MCF 10A (cell line): ENCODE measurements at regions of chr2 and their contacts with region 1.

Region 1: DNA sequence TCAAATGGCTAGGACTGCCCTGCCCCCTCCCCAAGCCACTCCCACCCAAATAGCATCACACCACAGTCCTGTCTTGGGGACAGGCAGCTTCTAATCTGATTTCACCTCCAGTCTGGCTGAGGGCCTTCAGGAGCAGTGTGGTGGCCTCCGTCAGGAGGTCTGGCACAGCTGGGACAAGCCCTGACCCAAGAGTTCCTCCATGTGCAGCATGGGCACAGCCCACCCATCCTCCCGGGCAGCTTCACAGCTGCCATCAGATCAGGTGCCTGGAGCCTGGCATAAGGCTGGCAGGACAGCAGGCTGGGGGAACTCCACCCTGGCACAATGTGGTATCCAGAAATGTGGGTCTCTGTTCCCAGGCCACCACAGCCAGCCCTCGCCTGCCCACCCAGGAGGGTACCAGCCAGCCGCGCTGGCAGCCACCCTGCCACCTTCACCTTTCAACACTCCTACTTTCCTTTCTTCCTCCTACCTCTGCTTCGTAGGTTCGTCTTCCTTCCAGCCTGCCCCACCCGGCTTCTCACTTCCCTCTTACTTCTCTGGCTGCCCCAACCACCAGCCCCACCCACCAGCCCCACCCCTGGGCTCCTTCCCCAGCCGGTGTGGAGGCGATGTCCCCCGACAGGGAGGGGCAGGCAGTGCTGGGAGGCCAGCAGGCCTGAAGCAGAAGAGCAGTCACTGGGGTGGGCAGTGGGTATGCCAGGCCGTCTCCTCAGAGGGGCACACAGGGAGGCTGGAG is at the start of gene CAPG:
- DNase-seq: peak; percentile 73
- H3K4me3 Mint-ChIP-seq: peak within 1 kb of the TSS; percentile 70
- H3K27ac Mint-ChIP-seq: peak within 1 kb of the TSS; percentile 83
- H3K4me1 Mint-ChIP-seq: peaks cover 34% of the 10 kb centered on the region
- H3K27me3 Mint-ChIP-seq: no peaks in the 10 kb centered on the region
- CTCF ChIP-seq: no peak
- total RNA-seq, gene CAPG: 173 and 188 TPM in 2 replicates

Region 2: GRCh38 chr2:85327822-85328617 is 82.0 kb before region 1 on chr2 and contains the start of gene TGOLN2:
- CTCF ChIA-PET with region 1: no interaction called
- POLR2A ChIA-PET with region 1: interaction called, 23 read pairs
- intact Hi-C with region 1: no loop called
- DNase-seq: peak; percentile 92
- H3K4me3 Mint-ChIP-seq: peak within 1 kb of the TSS; percentile 82
- H3K27ac Mint-ChIP-seq: peak within 1 kb of the TSS; percentile 94
- H3K4me1 Mint-ChIP-seq: peaks cover 16% of the 10 kb centered on the region
- H3K27me3 Mint-ChIP-seq: no peaks in the 10 kb centered on the region
- CTCF ChIP-seq: no peak
- total RNA-seq, gene TGOLN2: 62.9 and 65.5 TPM in 2 replicates

Region 3: DNA sequence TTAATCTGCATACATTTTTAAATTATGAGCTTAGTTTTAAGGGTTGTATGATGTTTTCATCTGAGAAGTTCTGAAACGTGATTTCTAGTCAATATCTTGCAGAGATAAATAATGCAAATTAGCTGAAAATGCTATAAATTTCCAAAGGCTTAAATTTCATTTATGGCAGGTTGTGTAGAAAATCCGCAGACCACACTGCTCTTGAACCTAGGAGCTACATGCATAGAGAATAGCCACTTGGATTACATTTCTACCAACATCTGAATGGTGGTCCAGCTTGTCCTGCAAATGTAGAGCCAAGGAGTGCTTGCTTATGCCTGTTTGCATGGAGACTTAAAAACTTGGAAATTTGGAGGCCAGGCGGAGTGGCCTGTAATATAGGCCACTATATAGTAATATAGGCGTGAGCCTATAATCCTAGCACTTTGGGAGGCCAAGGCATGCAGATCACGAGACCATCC is 135.8 kb after region 1 on chr2:
- CTCF ChIA-PET with region 1: interaction called, 20 read pairs
- POLR2A ChIA-PET with region 1: interaction called, 34 read pairs
- intact Hi-C with region 1: no loop called
- DNase-seq: no peak
- H3K4me3 Mint-ChIP-seq: no peak overlapping the region
- H3K27ac Mint-ChIP-seq: no peak overlapping the region
- H3K4me1 Mint-ChIP-seq: peaks cover 37% of the 10 kb centered on the region
- H3K27me3 Mint-ChIP-seq: no peaks in the 10 kb centered on the region
- CTCF ChIP-seq: no peak

Region 4: DNA sequence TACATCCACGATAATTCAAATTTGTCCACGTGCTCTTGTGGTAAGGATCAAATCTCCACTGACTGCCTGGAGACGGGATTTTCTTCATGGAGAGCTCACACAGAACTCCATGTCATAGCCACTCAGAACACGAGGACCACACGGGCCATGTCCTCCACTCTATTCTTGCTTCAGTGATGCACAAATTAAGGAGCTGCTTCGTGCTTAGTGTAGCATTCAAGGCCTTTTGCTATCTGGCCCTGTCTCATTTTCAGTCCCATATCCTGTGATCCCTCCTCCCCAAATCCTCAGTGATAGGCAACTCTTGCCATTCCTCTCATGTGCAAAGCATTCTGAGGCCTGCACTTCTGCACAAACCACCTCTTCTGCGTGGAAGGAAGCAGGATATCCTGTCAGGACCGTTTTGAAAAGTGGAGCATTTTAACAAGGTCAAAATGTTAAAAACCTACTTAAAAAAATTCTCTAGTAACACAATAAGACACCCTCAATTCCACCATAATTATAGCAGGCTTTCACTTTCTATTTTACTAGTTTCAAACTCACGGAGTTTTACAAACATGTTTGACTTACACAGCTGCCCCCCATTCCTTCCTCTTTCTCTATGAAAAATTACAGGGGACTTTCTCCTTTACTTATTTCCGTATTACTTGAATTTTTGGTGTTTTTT is 443.6 kb after region 1 on chr2:
- CTCF ChIA-PET with region 1: no interaction called
- POLR2A ChIA-PET with region 1: no interaction called
- intact Hi-C with region 1: no loop called
- DNase-seq: no peak
- H3K4me3 Mint-ChIP-seq: no peak overlapping the region
- H3K27ac Mint-ChIP-seq: no peak overlapping the region
- H3K4me1 Mint-ChIP-seq: no peaks in the 10 kb centered on the region
- H3K27me3 Mint-ChIP-seq: no peaks in the 10 kb centered on the region
- CTCF ChIP-seq: no peak